ENCODE measurements at regions of chr12 and their contacts with region 1.

Region 1: GRCh38 chr12:5083955-5084849 is 40.5 kb downstream of the KCNA5 start:
- DNase-seq: peak; percentile 33
- H3K4me3 Mint-ChIP-seq: no peak overlapping the region
- H3K27ac Mint-ChIP-seq: no peak overlapping the region
- H3K4me1 Mint-ChIP-seq: no peaks in the 10 kb centered on the region
- H3K27me3 Mint-ChIP-seq: no peaks in the 10 kb centered on the region
- CTCF ChIP-seq: peak; percentile 38

Region 2: DNA sequence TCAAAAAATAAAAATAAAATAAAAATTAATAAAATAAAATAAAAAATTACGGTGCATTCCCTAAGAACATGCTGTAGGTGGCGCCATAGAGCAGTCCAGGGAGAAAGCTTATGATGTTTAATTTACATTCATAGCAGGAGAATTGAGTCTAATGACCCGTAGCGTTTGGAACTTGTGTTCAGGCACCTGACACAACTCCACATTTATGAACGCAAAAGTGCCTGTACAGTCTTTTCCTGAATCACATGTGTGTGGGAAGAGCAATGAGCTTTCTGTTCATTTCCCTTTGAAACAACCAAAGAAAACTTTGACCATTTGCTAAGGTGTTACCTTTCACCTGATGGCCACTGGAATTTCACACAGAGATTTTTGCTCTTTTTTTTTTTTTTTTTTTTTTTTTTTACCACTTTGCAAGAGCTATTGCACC is 235.1 kb before region 1 on chr12:
- CTCF ChIA-PET with region 1: interaction called, 88 read pairs
- POLR2A ChIA-PET with region 1: no interaction called
- intact Hi-C with region 1: no loop called
- DNase-seq: peak; percentile 38
- H3K4me3 Mint-ChIP-seq: no peak overlapping the region
- H3K27ac Mint-ChIP-seq: no peak overlapping the region
- H3K4me1 Mint-ChIP-seq: no peaks in the 10 kb centered on the region
- H3K27me3 Mint-ChIP-seq: peaks cover 41% of the 10 kb centered on the region
- CTCF ChIP-seq: peak; percentile 70

Region 3: GRCh38 chr12:5022465-5023061 is 61.6 kb before region 1 on chr12:
- CTCF ChIA-PET with region 1: interaction called, 121 read pairs
- POLR2A ChIA-PET with region 1: no interaction called
- intact Hi-C with region 1: loop called (anchors 2 kb)
- DNase-seq: peak; percentile 46
- H3K4me3 Mint-ChIP-seq: no peak overlapping the region
- H3K27ac Mint-ChIP-seq: no peak overlapping the region
- H3K4me1 Mint-ChIP-seq: no peaks in the 10 kb centered on the region
- H3K27me3 Mint-ChIP-seq: no peaks in the 10 kb centered on the region
- CTCF ChIP-seq: peak; percentile 86

Region 4: GRCh38 chr12:5066251-5066650 is 18.0 kb before region 1 on chr12:
- CTCF ChIA-PET with region 1: interaction called, 11 read pairs
- POLR2A ChIA-PET with region 1: no interaction called
- intact Hi-C with region 1: no loop called
- DNase-seq: no peak
- H3K4me3 Mint-ChIP-seq: no peak overlapping the region
- H3K27ac Mint-ChIP-seq: no peak overlapping the region
- H3K4me1 Mint-ChIP-seq: no peaks in the 10 kb centered on the region
- H3K27me3 Mint-ChIP-seq: no peaks in the 10 kb centered on the region
- CTCF ChIP-seq: no peak